ENCODE measurements at regions of chr11 and their contacts with region 1.

Region 1: DNA sequence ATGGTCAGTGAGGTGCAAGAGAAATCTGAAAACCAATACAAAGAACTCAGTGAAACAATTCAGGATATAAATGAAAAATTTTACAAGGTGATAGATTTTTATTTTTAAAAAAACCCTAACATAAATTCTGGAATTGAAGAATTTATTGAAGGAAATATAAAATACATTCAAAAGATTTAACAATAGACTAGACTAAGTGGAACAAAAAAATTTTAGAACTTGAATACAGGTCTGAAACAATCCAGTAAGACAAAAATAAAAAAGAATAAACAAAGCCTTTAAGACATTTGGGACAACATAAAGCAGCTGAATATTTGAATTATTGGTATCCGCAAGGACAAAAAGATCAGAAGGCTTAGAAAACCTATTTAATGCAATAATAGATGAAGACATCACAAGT is 8.7 kb downstream of the SPA17 start:
- DNase-seq: no peak
- ATAC-seq: no peak
- H3K4me3 ChIP-seq: no peak overlapping the region
- H3K27ac ChIP-seq: no peak overlapping the region
- H3K4me1 ChIP-seq: peaks cover 0 to 1% (median 0%) of the 10 kb centered on the region in 9 donors
- H3K27me3 ChIP-seq: no peaks in the 10 kb centered on the region
- CTCF ChIP-seq: no peak

Region 2: GRCh38 chr11:124612045-124612444 is 70.4 kb before region 1 on chr11:
- intact Hi-C with region 1: no loop called
- DNase-seq: no peak
- ATAC-seq: no peak
- H3K4me3 ChIP-seq: no peak overlapping the region
- H3K27ac ChIP-seq: no peak overlapping the region
- H3K4me1 ChIP-seq: no peaks in the 10 kb centered on the region
- H3K27me3 ChIP-seq: peaks cover 0 to 26% (median 13%) of the 10 kb centered on the region in 7 donors
- CTCF ChIP-seq: no peak

Region 3: GRCh38 chr11:124724979-124725718 is 42.7 kb after region 1 on chr11:
- intact Hi-C with region 1: loop called in 3 of 10 experiments (anchors 2 to 5 kb)
- DNase-seq: peak in 1 of 2 donors; percentile 33
- ATAC-seq: peak; percentile 22 to 72 (median 51)
- H3K4me3 ChIP-seq: peak overlapping the region in 1 of 10 donors; percentile 7
- H3K27ac ChIP-seq: peak overlapping the region in 7 of 10 donors; percentile 3 to 58 (median 40)
- H3K4me1 ChIP-seq: peaks cover 0 to 34% (median 16%) of the 10 kb centered on the region in 9 donors
- H3K27me3 ChIP-seq: peaks cover 0 to 53% (median 34%) of the 10 kb centered on the region in 7 donors
- CTCF ChIP-seq: no peak

Region 4: DNA sequence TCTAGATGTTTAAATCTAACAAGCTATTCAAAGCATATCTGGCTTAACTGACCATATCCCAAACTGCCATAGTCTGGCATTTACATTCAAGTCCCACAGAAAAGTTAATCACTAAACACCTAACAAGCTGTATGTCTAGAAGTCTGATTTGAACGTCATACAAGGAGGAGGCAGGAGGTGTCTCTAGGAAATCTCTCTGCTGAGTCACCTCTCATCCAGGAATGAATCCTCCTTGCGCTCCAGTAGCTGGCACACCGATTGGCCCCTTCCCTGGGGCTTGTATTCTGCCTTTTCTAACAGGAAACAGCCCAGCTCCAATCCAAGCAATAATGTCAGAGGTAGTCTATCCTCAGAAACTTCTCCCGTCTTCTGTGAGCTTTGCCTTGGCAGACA is 781.8 kb after region 1 on chr11:
- intact Hi-C with region 1: no loop called
- DNase-seq: no peak
- ATAC-seq: no peak
- H3K4me3 ChIP-seq: no peak overlapping the region
- H3K27ac ChIP-seq: no peak overlapping the region
- H3K4me1 ChIP-seq: no peaks in the 10 kb centered on the region
- H3K27me3 ChIP-seq: no peaks in the 10 kb centered on the region
- CTCF ChIP-seq: no peak

Measured in heart right ventricle (tissue), 16 donors.